Activated T-helper 1 cell treated with anti-CD3 and anti-CD28 coated beads, Interleukin-12 subunit alpha, Interleukin-12 subunit beta, Interleukin-2, Interleukin-4 antibody, amounts not matched to agents 30 ng/mL and 10 ng/mL and 1 ng/mL, durations not matched to agents 14 hours and 24 hours and 36 hours (primary cell): ENCODE measurements at regions of chr14 and their contacts with region 1.

Region 1: GRCh38 chr14:95157327-95158189 is at the start of gene DICER1:
- DNase-seq: peak; percentile 92
- H3K4me3 Mint-ChIP-seq: peak within 1 kb of the TSS; percentile 94
- H3K27ac Mint-ChIP-seq: peak within 1 kb of the TSS; percentile 99
- H3K4me1 Mint-ChIP-seq: peaks cover 41% of the 10 kb centered on the region
- H3K27me3 Mint-ChIP-seq: no peaks in the 10 kb centered on the region
- total RNA-seq, gene DICER1: 76.8 and 87.2 TPM in 2 replicates

Region 2: DNA sequence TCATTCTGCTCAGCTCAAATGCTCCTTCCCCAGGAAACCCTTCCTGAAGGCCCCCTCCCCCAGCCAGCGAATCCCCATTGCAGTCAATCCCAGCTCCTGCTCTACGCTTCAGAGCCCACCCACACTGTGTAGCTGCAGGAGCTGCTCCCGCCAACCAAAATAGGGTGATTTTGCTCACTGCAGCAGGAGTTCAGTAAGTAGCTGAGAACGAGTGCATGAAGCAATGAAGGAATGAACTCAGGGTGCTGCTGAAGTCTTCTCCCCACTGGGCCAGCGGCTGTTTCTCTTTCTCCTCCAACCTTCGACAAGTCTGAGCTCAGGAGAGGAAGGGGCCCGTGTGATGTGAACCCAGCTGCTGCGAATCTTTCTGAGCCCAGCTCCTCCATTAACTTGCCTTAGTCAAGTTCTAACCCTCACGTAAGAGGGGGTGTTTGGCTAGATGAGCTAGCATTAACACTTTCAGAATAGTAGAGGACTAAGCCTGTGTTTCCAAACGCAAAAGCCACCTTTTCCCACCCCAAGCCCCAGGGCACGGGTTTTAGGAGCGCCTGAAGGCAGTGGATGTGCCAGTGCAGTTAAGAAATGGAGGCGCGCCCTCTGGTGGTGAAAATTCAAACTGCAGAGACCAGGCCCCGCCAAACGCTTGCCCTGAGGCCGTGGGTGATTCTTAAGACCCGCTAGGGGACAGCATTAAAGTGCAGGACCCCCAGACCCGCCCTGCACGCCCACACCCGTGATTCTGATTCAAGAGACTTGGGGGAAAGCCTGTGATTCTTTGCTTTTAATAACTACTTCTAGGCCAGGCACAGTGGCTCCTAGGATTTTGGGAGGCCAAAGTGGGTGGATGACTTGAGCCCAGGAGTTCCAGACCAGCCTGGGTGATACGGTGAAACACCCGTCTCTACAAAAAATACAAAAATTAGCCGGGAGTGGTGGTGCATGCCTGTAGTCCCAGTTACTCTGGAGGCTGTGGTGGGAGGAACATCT is 608.3 kb before region 1 on chr14:
- intact Hi-C with region 1: no loop called
- DNase-seq: peak; percentile 24
- H3K4me3 Mint-ChIP-seq: no peak overlapping the region
- H3K27ac Mint-ChIP-seq: no peak overlapping the region
- H3K4me1 Mint-ChIP-seq: no peaks in the 10 kb centered on the region
- H3K27me3 Mint-ChIP-seq: peaks cover 11% of the 10 kb centered on the region

Region 3: GRCh38 chr14:95265106-95266094 is 107.8 kb after region 1 on chr14:
- intact Hi-C with region 1: loop called (anchors 1 kb)
- DNase-seq: peak; percentile 27
- H3K4me3 Mint-ChIP-seq: peak overlapping the region; percentile 5
- H3K27ac Mint-ChIP-seq: peak overlapping the region; percentile 32
- H3K4me1 Mint-ChIP-seq: peaks cover 39% of the 10 kb centered on the region
- H3K27me3 Mint-ChIP-seq: peaks cover 4% of the 10 kb centered on the region

Region 4: GRCh38 chr14:95319312-95320021 is 161.9 kb after region 1 on chr14 and contains the start of gene CLMN:
- intact Hi-C with region 1: loop called (anchors 2 kb)
- DNase-seq: peak; percentile 13
- H3K4me3 Mint-ChIP-seq: peak within 1 kb of the TSS; percentile 69
- H3K27ac Mint-ChIP-seq: peak within 1 kb of the TSS; percentile 30
- H3K4me1 Mint-ChIP-seq: peaks cover 6% of the 10 kb centered on the region
- H3K27me3 Mint-ChIP-seq: peaks cover 32% of the 10 kb centered on the region
- total RNA-seq, gene CLMN: 0.66 and 0.80 TPM in 2 replicates

Region 5: GRCh38 chr14:95402176-95402575 is 244.6 kb after region 1 on chr14:
- intact Hi-C with region 1: no loop called
- DNase-seq: no peak
- H3K4me3 Mint-ChIP-seq: no peak overlapping the region
- H3K27ac Mint-ChIP-seq: no peak overlapping the region
- H3K4me1 Mint-ChIP-seq: no peaks in the 10 kb centered on the region
- H3K27me3 Mint-ChIP-seq: no peaks in the 10 kb centered on the region

Region 6: GRCh38 chr14:95534299-95535225 is 377.0 kb after region 1 on chr14 and contains the start of gene GLRX5:
- intact Hi-C with region 1: loop called (anchors 1 kb)
- DNase-seq: peak; percentile 98
- H3K4me3 Mint-ChIP-seq: peak within 1 kb of the TSS; percentile 98
- H3K27ac Mint-ChIP-seq: peak within 1 kb of the TSS; percentile 95
- H3K4me1 Mint-ChIP-seq: peaks cover 73% of the 10 kb centered on the region
- H3K27me3 Mint-ChIP-seq: no peaks in the 10 kb centered on the region
- total RNA-seq, gene GLRX5: 46.7 and 48.9 TPM in 2 replicates

Region 7: GRCh38 chr14:96362965-96363756 is 1205.6 kb after region 1 on chr14 and contains the starts of genes ATG2B and GSKIP:
- intact Hi-C with region 1: loop called (anchors 10 kb)
- DNase-seq: peak; percentile 97
- H3K4me3 Mint-ChIP-seq: peak within 1 kb of the TSS; percentile 98
- H3K27ac Mint-ChIP-seq: peak within 1 kb of the TSS; percentile 97
- H3K4me1 Mint-ChIP-seq: peaks cover 55% of the 10 kb centered on the region
- H3K27me3 Mint-ChIP-seq: no peaks in the 10 kb centered on the region
- total RNA-seq, gene ATG2B: 22.2 and 27.7 TPM in 2 replicates
- total RNA-seq, gene GSKIP: 22.7 and 23.7 TPM in 2 replicates